A549 (cell line): ENCODE measurements at regions of chr3 and their contacts with region 1.

Region 1: GRCh38 chr3:123028233-123028828 is 768 bp upstream of the SEMA5B start:
- DNase-seq: peak; percentile 72 to 74
- ATAC-seq: peak; percentile 45 to 63
- H3K4me3 ChIP-seq: peak overlapping the region; percentile 72
- H3K27ac ChIP-seq: peak overlapping the region in 1 of 2 experiments; percentile 57; a peak in 3 of 6 replicates
- H3K4me1 ChIP-seq: peaks cover 6% of the 10 kb centered on the region; the same call in 2 of the 3 replicates
- CTCF ChIP-seq: peak; percentile 75
- EP300 ChIP-seq: no peak
- POLR2A ChIP-seq: no peak
- RAD21 ChIP-seq: peak; percentile 69 to 70

Region 2: DNA sequence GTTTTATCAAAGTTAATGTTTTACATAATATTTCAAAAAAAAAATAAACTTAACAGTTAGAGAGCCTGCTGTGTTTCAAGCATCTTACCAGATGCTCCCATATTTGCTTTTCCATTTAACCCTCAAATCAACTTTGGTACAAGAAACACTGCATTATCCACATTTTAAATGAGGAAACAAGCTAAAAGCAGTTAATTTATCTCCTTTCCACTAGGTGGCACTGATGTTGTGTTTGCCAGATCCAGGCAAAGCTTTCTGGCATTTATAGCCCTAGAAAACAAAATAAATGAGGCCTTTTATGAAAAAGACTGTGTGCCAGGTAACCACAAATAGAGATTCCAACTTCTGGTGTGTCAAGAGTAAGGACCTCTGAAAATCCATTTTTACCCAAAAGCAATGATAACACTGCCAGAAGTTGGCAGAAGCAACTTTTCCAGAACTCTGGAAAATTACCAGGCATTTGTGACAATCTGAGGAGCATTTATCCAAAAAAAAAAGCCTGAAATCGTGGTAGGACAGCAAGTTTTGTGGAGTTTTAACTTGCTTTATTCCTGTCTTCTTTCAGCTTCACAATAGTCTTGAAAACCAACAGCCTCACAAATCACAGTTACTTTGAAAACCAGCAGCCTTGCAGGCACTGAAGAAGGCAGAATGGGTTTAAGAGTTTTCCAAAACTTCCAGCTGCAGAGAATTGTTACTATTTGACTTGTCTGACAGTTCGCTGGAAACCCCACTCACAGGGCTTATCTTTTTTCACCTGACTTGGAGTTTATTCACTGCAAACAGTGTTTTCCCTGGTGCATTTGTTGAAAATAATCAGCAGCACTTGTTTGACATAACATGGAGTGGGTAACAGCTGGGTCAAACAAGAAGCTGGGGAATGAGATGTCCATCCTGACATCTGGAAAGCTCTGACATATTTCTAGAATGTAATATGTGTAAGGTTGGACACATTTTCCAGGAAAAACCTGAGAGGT is 635.2 kb before region 1 on chr3:
- CTCF ChIA-PET with region 1: interaction called, 23 read pairs
- POLR2A ChIA-PET with region 1: no interaction called
- DNase-seq: peak; percentile 43 to 60
- ATAC-seq: peak; percentile 50 to 67; a peak in 3 of 6 replicates
- H3K4me3 ChIP-seq: no peak overlapping the region
- H3K27ac ChIP-seq: no peak overlapping the region
- H3K4me1 ChIP-seq: no peaks in the 10 kb centered on the region
- CTCF ChIP-seq: peak; percentile 75
- EP300 ChIP-seq: no peak
- POLR2A ChIP-seq: no peak
- RAD21 ChIP-seq: peak; percentile 76 to 78

Region 3: DNA sequence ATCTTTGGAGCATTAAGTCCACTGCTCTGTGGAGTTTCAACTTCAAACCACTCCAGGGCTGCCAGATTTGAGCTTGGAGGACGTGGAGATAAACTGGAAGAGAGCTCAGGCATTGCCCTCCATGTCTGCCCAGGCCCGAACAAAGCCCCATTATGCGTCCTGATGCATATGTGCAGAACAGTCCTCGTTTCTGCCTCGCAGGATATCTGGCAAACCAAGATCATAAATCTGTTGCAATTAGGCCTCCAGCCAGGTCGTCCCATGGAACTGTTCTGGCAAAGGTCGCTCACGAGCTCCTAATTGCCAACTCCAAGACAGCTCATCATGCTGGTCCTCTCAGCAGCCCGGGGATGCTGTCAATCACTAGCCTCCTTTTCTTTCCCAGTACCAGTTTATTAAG is 92.0 kb before region 1 on chr3:
- CTCF ChIA-PET with region 1: interaction called, 95 read pairs
- POLR2A ChIA-PET with region 1: no interaction called
- DNase-seq: no peak
- ATAC-seq: no peak
- H3K4me3 ChIP-seq: no peak overlapping the region
- H3K27ac ChIP-seq: no peak overlapping the region
- H3K4me1 ChIP-seq: no peaks in the 10 kb centered on the region
- CTCF ChIP-seq: no peak
- EP300 ChIP-seq: no peak
- POLR2A ChIP-seq: no peak
- RAD21 ChIP-seq: no peak

Region 4: GRCh38 chr3:122942937-122943827 is 85.1 kb before region 1 on chr3:
- CTCF ChIA-PET with region 1: interaction called, 95 read pairs
- POLR2A ChIA-PET with region 1: no interaction called
- DNase-seq: peak; percentile 64 to 94
- ATAC-seq: peak; percentile 87 to 98
- H3K4me3 ChIP-seq: no peak overlapping the region
- H3K27ac ChIP-seq: no peak overlapping the region
- H3K4me1 ChIP-seq: peaks cover 6% of the 10 kb centered on the region; the same call in 2 of the 3 replicates
- CTCF ChIP-seq: peak; percentile 75
- EP300 ChIP-seq: no peak
- POLR2A ChIP-seq: no peak
- RAD21 ChIP-seq: peak; percentile 81 to 82

Region 5: GRCh38 chr3:123015557-123015956 is 12.8 kb before region 1 on chr3:
- CTCF ChIA-PET with region 1: interaction called, 37 read pairs
- POLR2A ChIA-PET with region 1: no interaction called
- DNase-seq: no peak
- ATAC-seq: peak in 1 of 2 experiments; percentile 60; a peak in 3 of 6 replicates
- H3K4me3 ChIP-seq: no peak overlapping the region
- H3K27ac ChIP-seq: no peak overlapping the region
- H3K4me1 ChIP-seq: no peaks in the 10 kb centered on the region
- CTCF ChIP-seq: peak; percentile 15; the same call in 1 of the 3 replicates
- EP300 ChIP-seq: no peak
- POLR2A ChIP-seq: no peak
- RAD21 ChIP-seq: no peak; a peak in 2 of 5 replicates

Region 6: GRCh38 chr3:123066896-123067688 is 38.8 kb after region 1 on chr3 and contains the start of gene PDIA5:
- CTCF ChIA-PET with region 1: interaction called, 18 read pairs
- POLR2A ChIA-PET with region 1: no interaction called
- DNase-seq: peak; percentile 88 to 97
- ATAC-seq: peak; percentile 91 to 95
- H3K4me3 ChIP-seq: peak within 1 kb of the TSS; percentile 98
- H3K27ac ChIP-seq: peak within 1 kb of the TSS; percentile 90
- H3K4me1 ChIP-seq: peaks cover 23% of the 10 kb centered on the region
- CTCF ChIP-seq: no peak
- EP300 ChIP-seq: no peak
- POLR2A ChIP-seq: peak; percentile 89
- RAD21 ChIP-seq: no peak
- polyA plus RNA-seq, gene PDIA5: 25.3 and 28.1 TPM in 2 replicates